Right cardiac atrium (tissue), 5 donors: ENCODE measurements at regions of chr6 and their contacts with region 1.

Region 1: GRCh38 chr6:33248925-33249731 is 22.5 kb downstream of the VPS52 start:
- DNase-seq: peak; percentile 98 to 99 (median 99)
- ATAC-seq: peak; percentile 97
- H3K4me3 ChIP-seq: peak overlapping the region; percentile 47
- H3K27ac ChIP-seq: peak overlapping the region; percentile 94
- H3K4me1 ChIP-seq: peaks cover 4% of the 10 kb centered on the region
- H3K27me3 ChIP-seq: no peaks in the 10 kb centered on the region

Region 2: GRCh38 chr6:33014841-33015634 is 234.1 kb before region 1 on chr6:
- intact Hi-C with region 1: loop called in 3 of 4 experiments (anchors 5 kb)
- DNase-seq: no peak
- ATAC-seq: peak; percentile 51 to 53
- H3K4me3 ChIP-seq: no peak overlapping the region
- H3K27ac ChIP-seq: peak overlapping the region; percentile 14
- H3K4me1 ChIP-seq: peaks cover 8% of the 10 kb centered on the region
- H3K27me3 ChIP-seq: no peaks in the 10 kb centered on the region

Region 3: DNA sequence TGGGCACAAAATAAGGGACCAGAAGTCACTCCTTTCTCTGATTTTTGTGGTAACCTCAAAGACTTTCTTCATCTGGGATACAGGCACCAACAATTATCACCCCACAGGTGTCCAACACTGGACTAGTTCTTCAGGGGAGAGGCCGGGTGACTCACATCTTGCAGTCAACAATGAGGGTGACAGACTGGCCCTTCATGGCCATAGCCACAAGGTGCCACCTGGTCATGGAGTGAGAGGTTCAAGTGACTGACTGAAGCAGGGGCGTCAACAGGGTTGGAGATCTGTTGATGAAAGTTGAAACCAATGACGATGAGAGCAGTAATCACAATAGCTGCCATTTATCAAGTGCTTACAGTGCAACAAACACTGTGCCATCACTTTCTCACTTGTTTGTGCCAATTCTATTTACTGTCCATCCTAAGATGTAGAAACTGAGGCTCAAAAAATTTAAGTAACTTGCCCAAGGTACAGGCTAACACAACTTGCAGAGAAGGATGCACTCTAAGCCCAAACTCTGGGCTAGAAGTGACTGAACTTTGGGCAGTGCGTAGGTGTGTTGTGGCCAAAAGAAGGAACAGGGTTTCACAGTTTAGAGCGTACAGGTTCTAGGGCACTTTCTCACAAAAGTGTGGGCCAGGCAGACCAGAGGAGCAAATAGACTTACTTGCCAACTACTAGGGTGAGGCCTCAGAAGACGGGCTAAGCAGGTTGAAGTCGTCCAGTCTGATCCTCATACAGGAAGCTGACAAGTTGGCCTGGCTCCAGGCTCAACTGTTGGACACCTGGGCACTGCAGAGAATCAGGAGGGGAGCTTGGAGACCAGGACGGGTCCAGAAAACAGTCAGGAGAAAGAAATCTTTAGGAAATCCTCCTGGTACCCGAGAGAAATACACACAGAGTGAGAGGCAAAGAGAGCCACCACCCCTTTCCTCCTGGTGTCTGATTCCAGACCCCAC is 142.9 kb before region 1 on chr6:
- intact Hi-C with region 1: no loop called
- DNase-seq: no peak
- ATAC-seq: no peak
- H3K4me3 ChIP-seq: no peak overlapping the region
- H3K27ac ChIP-seq: no peak overlapping the region
- H3K4me1 ChIP-seq: no peaks in the 10 kb centered on the region
- H3K27me3 ChIP-seq: no peaks in the 10 kb centered on the region

Region 4: GRCh38 chr6:33126101-33126714 is 122.9 kb before region 1 on chr6:
- intact Hi-C with region 1: loop called in 3 of 4 experiments (anchors 5 to 10 kb)
- DNase-seq: peak; percentile 72 to 93 (median 82)
- ATAC-seq: peak; percentile 62 to 69
- H3K4me3 ChIP-seq: no peak overlapping the region
- H3K27ac ChIP-seq: no peak overlapping the region
- H3K4me1 ChIP-seq: no peaks in the 10 kb centered on the region
- H3K27me3 ChIP-seq: no peaks in the 10 kb centered on the region

Region 5: DNA sequence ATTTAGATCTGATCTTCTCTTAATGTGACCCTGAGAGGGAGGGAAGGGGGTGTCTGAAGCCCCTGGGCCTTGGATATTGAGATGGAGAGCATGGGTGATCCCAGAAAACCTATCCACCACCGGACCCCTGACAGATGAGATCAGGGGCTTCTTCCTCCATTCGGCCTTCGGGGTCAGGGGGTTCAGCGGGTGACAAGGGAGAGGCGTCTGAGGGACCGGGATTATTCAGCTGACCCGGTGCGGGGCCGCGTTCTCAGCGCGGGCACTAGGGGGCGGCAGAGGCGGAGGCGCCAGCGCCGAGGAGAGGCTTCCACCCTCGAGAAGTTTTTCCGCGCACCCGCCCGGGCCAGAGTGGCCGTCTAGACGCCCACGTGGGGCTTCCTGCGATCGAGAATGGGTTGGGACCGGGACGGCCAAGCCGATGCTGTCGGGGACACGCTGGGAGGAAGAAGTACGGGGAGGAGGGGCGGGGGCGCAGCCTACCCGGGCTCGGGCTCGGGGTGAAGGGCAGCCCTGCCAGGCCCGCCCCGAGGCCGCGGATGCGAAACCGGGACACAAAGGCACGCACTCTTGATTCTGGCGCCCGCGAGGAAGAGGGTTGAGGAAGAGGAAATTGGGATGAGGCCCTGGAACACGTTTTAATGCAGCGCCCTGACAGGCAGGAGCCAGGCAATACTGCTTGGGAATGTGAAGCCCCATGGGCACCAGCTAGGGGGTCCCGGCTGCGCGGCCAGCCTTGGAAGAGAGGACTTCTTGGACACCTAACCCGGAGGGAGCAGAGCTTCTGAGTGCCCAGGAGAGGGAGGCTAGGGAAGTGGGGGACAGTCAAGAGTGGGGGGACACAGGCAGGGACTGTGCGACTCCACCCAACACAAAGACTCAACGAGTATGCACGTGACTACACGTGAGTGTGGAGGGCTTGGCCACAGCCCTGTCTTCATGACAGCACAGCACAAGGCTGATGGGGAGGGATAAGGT is 87.5 kb before region 1 on chr6:
- intact Hi-C with region 1: loop called in 3 of 4 experiments (anchors 1 to 5 kb)
- DNase-seq: peak; percentile 87 to 94 (median 93)
- ATAC-seq: peak; percentile 91 to 94
- H3K4me3 ChIP-seq: peak overlapping the region; percentile 41
- H3K27ac ChIP-seq: peak overlapping the region; percentile 9
- H3K4me1 ChIP-seq: no peaks in the 10 kb centered on the region
- H3K27me3 ChIP-seq: no peaks in the 10 kb centered on the region

Region 6: DNA sequence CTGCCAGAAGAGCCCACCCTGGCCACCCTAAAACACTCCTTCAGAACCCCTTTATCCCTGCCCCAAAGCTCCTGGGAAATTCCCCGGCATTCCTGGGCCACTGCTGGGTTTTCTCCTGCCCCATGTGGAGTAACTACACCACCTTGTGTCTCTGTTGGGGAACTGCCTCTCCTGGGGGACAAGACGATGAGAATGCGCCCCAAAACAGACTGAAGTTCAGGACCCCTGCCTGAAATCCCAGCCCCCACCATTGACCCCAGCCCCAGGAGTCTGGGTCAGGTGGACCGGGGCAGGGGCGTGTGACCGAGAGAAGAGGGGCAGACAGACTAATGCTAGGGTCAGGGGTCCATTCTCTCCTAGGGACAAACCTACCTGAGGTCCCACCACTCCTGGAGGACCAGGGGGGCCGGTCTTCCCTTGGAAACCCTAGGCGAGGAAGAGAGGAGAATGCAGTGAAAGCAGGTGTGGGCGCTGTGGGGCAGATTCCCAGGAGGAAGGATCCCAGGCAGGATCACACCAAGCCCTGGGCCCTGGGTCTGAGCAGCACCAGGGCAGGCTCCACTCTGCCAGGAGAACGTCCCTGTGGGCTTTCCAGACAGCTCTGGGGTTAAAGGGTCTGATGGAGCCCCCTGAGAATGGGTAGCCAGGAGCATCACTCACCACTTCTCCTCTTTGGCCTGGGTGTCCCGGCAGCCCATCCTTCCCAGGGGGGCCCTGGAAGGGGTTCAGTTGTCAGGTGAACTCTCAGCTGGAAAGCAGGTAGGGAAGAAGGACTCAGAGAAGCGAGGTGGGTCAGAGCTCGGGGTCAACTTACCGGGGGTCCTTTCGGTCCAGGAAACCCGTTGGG is 76.2 kb before region 1 on chr6:
- intact Hi-C with region 1: loop called in 2 of 4 experiments (anchors 5 to 10 kb)
- DNase-seq: peak; percentile 8 to 30 (median 14)
- ATAC-seq: no peak
- H3K4me3 ChIP-seq: no peak overlapping the region
- H3K27ac ChIP-seq: no peak overlapping the region
- H3K4me1 ChIP-seq: no peaks in the 10 kb centered on the region
- H3K27me3 ChIP-seq: no peaks in the 10 kb centered on the region